WTC11 (cell line): ENCODE measurements at regions of chr11 and their contacts with region 1.

Region 1: GRCh38 chr11:44823006-44823405 is 96.2 kb downstream of the TSPAN18 start:
- DNase-seq: peak; percentile 51
- ATAC-seq: peak; percentile 18
- H3K4me3 Mint-ChIP-seq: no peak overlapping the region
- H3K27ac Mint-ChIP-seq: no peak overlapping the region
- H3K4me1 Mint-ChIP-seq: peaks cover 41% of the 10 kb centered on the region
- H3K27me3 Mint-ChIP-seq: peaks cover 23% of the 10 kb centered on the region
- CTCF ChIP-seq: no peak

Region 2: GRCh38 chr11:44797941-44798606 is 24.9 kb before region 1 on chr11:
- CTCF ChIA-PET with region 1: interaction called, 19 read pairs
- POLR2A ChIA-PET with region 1: no interaction called
- DNase-seq: no peak
- ATAC-seq: peak; percentile 79
- H3K4me3 Mint-ChIP-seq: peak overlapping the region; percentile 10; the same call in 1 of the 2 replicates
- H3K27ac Mint-ChIP-seq: peak overlapping the region; percentile 86
- H3K4me1 Mint-ChIP-seq: peaks cover 71% of the 10 kb centered on the region
- H3K27me3 Mint-ChIP-seq: no peaks in the 10 kb centered on the region; the same call in 1 of the 2 replicates
- CTCF ChIP-seq: no peak

Region 3: GRCh38 chr11:44833877-44834452 is 11.0 kb after region 1 on chr11:
- CTCF ChIA-PET with region 1: interaction called, 36 read pairs
- POLR2A ChIA-PET with region 1: interaction called, 5 read pairs
- DNase-seq: no peak
- ATAC-seq: peak; percentile 74
- H3K4me3 Mint-ChIP-seq: no peak overlapping the region
- H3K27ac Mint-ChIP-seq: peak overlapping the region; percentile 64; the same call in 1 of the 2 replicates
- H3K4me1 Mint-ChIP-seq: peaks cover 53% of the 10 kb centered on the region
- H3K27me3 Mint-ChIP-seq: peaks cover 3% of the 10 kb centered on the region; the same call in 1 of the 2 replicates
- CTCF ChIP-seq: no peak

Region 4: GRCh38 chr11:44877571-44878497 is 54.8 kb after region 1 on chr11:
- CTCF ChIA-PET with region 1: interaction called, 16 read pairs
- POLR2A ChIA-PET with region 1: no interaction called
- DNase-seq: no peak
- ATAC-seq: peak; percentile 34
- H3K4me3 Mint-ChIP-seq: no peak overlapping the region
- H3K27ac Mint-ChIP-seq: no peak overlapping the region
- H3K4me1 Mint-ChIP-seq: peaks cover 3% of the 10 kb centered on the region; the same call in 1 of the 2 replicates
- H3K27me3 Mint-ChIP-seq: no peaks in the 10 kb centered on the region
- CTCF ChIP-seq: no peak